Activated CD4-positive, alpha-beta T cell treated with anti-CD3 and anti-CD28 coated beads for 36 hours (primary cell): ENCODE measurements at regions of chr11 and their contacts with region 1.

Region 1: DNA sequence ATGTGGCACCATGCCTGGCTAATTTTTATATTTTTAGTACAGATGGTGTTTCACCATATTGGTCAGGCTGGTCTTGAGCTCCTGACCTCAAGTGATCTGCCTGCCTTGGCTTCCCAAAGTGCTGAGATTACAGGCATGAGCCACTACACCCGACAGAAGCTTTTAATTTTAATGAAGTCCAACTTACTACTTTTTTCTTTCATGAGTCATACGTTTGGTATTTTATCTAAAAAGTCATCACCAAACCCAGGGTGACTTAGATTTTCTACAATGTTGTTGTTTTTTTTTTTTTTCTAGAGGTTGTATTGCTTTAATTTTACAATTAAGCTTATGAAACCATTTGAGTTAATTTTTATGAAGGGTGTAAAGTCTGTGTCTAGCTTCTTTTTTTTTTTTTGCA is 34.9 kb downstream of the JRKL start:
- DNase-seq: no peak
- ATAC-seq: peak; percentile 80
- H3K4me3 Mint-ChIP-seq: no peak overlapping the region
- H3K27ac Mint-ChIP-seq: no peak overlapping the region
- H3K4me1 Mint-ChIP-seq: peaks cover 14% of the 10 kb centered on the region
- H3K27me3 Mint-ChIP-seq: peaks cover 28% of the 10 kb centered on the region

Region 2: DNA sequence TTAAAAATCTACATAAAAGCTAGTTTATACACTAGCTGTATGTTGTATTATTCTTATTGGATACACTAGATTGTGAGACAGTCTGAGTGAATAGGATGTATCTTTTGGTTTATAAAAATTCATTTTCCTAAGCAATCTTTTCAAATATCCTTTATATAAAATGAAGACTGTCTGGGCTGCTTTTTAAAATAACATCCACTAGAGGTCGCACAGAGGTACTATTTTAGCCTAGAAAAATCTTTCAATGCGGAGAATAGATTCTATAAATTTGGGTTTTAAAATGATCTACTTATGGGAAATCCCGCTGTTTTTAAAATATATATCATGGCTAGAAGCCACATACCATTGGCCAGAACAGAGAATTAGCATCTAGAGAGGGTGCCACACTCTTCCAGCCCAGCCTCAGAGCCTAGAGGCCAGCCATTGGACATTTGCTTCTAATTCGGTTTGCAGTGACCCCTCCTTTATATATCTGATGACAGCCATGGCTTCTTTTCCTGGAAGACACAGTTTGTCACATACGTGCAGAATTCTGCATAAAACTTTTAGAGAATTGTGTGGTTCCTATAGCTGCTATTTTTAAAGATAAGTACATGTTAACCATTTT is 1905.1 kb before region 1 on chr11:
- CTCF ChIA-PET with region 1: no interaction called
- POLR2A ChIA-PET with region 1: no interaction called
- intact Hi-C with region 1: loop called in 1 of 2 experiments (anchors 5 kb)
- DNase-seq: no peak
- ATAC-seq: peak; percentile 30
- H3K4me3 Mint-ChIP-seq: no peak overlapping the region
- H3K27ac Mint-ChIP-seq: no peak overlapping the region
- H3K4me1 Mint-ChIP-seq: no peaks in the 10 kb centered on the region
- H3K27me3 Mint-ChIP-seq: peaks cover 12% of the 10 kb centered on the region

Region 3: GRCh38 chr11:95835768-95836488 is 588.8 kb before region 1 on chr11:
- CTCF ChIA-PET with region 1: interaction called, 39 read pairs
- POLR2A ChIA-PET with region 1: no interaction called
- intact Hi-C with region 1: loop called (anchors 1 kb)
- DNase-seq: peak; percentile 69
- ATAC-seq: peak; percentile 87
- H3K4me3 Mint-ChIP-seq: no peak overlapping the region
- H3K27ac Mint-ChIP-seq: no peak overlapping the region
- H3K4me1 Mint-ChIP-seq: peaks cover 6% of the 10 kb centered on the region
- H3K27me3 Mint-ChIP-seq: no peaks in the 10 kb centered on the region

Region 4: DNA sequence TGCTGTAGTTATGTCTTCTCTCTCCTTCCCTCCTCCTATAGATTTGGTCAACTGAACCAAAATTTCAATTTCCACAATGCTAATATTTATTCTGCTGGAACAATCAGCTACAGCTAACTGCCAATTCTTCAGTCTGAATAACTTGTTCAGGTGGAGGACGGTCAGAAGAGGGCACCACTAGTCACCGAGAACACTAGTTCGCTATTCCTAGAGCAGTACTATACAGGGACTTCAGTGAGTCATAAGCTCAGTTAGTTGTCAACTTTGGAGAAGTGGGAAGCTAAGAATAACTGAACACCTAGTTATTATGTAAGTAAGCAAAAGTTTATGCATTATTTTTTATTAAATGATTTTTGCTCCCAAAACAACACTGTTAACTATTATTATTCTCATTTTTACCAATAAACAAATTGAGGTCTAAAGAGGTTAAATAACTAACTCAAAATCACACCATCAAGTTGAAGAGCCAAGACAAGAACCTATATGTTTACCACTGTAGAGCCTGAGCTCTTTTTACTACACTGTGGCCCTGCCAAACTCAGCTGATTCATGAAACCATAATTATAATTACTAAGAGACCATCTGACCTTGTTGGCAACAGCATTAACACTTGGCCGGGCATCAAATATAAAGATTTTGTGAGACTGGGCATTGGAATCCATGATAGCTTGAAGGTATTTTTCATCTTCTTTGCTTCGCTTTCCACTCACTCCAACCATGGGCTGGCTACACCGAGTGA is 575.4 kb before region 1 on chr11:
- CTCF ChIA-PET with region 1: interaction called, 6 read pairs
- POLR2A ChIA-PET with region 1: no interaction called
- intact Hi-C with region 1: loop called in 1 of 2 experiments (anchors 1 kb)
- DNase-seq: peak; percentile 56
- ATAC-seq: peak; percentile 74
- H3K4me3 Mint-ChIP-seq: no peak overlapping the region
- H3K27ac Mint-ChIP-seq: no peak overlapping the region
- H3K4me1 Mint-ChIP-seq: no peaks in the 10 kb centered on the region
- H3K27me3 Mint-ChIP-seq: no peaks in the 10 kb centered on the region